RWPE1 (cell line): ENCODE measurements at regions of chr1 and their contacts with region 1.

Region 1: GRCh38 chr1:157969697-157970485 is 23.6 kb upstream of the KIRREL1 start:
- DNase-seq: peak; percentile 78
- H3K27ac ChIP-seq: peak overlapping the region; percentile 97; the same call in 1 of the 2 replicates
- CTCF ChIP-seq: peak; percentile 74

Region 2: GRCh38 chr1:158045639-158046038 is 75.7 kb after region 1 on chr1:
- CTCF ChIA-PET with region 1: no interaction called
- POLR2A ChIA-PET with region 1: no interaction called
- DNase-seq: no peak
- H3K27ac ChIP-seq: no peak overlapping the region
- CTCF ChIP-seq: no peak

Region 3: GRCh38 chr1:158095737-158096335 is 125.9 kb after region 1 on chr1:
- CTCF ChIA-PET with region 1: interaction called, 10 read pairs
- POLR2A ChIA-PET with region 1: interaction called, 3 read pairs
- DNase-seq: peak; percentile 46
- H3K27ac ChIP-seq: peak overlapping the region; percentile 15; the same call in 1 of the 2 replicates
- CTCF ChIP-seq: peak; percentile 58

Region 4: GRCh38 chr1:158124999-158125398 is 155.1 kb after region 1 on chr1:
- CTCF ChIA-PET with region 1: interaction called, 37 read pairs
- POLR2A ChIA-PET with region 1: no interaction called
- DNase-seq: peak; percentile 87
- H3K27ac ChIP-seq: peak overlapping the region; percentile 23; the same call in 1 of the 2 replicates
- CTCF ChIP-seq: peak; percentile 90